Endothelial cell of umbilical vein (primary cell): ENCODE measurements at regions of chr6 and their contacts with region 1.

Region 1: GRCh38 chr6:150016324-150017185 is 8.8 kb downstream of the RAET1L start:
- DNase-seq: peak; percentile 63
- H3K4me3 ChIP-seq: no peak overlapping the region
- H3K27ac ChIP-seq: no peak overlapping the region
- H3K4me1 ChIP-seq: no peaks in the 10 kb centered on the region
- H3K27me3 ChIP-seq: peaks cover 35 to 57% of the 10 kb centered on the region in 2 experiments
- CTCF ChIP-seq: peak; percentile 39 to 49
- POLR2A ChIP-seq: no peak

Region 2: DNA sequence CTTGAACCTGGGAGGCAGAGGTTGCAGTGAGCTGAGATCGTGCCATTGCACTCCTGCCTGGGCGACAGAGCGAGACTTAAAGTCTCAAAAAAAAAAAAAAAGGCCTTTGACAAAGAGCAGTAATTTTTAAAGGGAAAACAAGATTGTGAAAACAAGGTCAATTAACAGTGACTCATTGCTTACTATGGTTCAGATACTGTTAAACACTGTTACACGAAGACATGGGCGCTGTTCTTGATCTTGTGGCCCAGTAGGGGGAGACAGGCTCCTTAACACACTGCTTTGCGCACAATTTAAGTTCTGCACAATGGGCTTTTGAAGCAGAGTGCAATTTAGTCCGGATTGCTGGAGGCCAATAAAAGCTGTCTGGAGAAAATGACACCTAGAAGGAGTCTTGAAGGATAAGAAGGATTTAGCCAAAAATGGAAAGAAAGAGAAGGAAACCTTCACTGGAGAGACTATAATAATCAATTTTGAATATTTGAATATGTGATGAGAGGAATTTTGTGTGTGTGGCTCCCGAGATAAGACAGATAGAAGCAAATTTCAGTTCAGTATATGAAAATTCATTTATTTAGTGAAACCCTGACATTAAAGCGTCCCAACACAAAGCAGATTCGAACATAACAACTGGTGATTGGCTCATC is 292.7 kb before region 1 on chr6:
- CTCF ChIA-PET with region 1: interaction called, 3 read pairs
- POLR2A ChIA-PET with region 1: no interaction called
- dilution Hi-C with region 1: no loop called
- intact Hi-C with region 1: loop called (anchors 5 kb)
- DNase-seq: peak; percentile 76
- H3K4me3 ChIP-seq: no peak overlapping the region
- H3K27ac ChIP-seq: no peak overlapping the region
- H3K4me1 ChIP-seq: peaks cover under 1% of the 10 kb centered on the region
- H3K27me3 ChIP-seq: no peaks in the 10 kb centered on the region
- CTCF ChIP-seq: peak; percentile 77
- POLR2A ChIP-seq: no peak

Region 3: DNA sequence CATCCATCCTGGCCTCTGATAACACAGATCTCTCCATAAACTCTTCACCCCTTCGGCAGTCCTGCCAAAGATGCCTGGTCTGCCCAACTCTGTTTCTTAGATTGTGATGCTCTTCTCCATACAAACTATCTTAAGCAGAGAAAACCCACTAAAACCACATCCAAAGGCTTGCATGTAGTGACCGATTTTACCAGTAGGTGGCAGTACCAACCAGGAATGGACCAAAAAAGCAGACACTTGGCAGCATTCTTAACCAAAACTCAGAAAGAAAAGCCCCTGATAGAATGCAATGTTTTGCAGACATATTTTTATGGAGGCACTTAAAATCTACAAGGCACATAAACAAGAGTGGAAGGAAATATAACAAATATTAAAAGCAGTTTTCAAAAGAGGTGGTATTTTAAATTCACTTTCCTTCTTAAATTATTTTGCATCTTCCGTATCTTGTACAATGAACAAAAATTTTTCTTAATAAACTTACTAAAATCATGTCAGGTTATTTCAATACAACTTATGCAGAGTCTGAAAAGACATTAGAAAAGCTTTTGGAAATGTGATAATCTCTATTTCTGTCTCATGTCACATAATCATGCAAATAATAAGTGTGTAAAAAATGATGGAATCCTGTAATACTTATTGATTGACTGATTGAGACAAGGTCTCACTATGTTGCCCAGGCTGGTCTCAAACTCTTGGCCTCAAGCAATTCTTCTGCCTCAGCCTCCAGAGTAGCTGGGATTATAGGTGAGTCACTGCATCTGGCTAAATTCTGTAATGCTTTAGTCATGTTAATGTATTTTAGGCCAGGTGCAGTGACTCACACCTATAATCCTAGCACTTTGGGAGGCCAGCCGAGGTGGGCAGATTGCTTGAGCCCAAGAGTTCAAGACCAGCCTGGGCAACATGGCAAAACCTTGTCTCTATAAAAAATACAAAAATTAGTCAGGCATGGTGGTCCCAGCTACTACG is 181.8 kb before region 1 on chr6:
- CTCF ChIA-PET with region 1: interaction called, 11 read pairs
- POLR2A ChIA-PET with region 1: no interaction called
- dilution Hi-C with region 1: no loop called
- intact Hi-C with region 1: loop called (anchors 5 kb)
- DNase-seq: peak; percentile 80
- H3K4me3 ChIP-seq: no peak overlapping the region
- H3K27ac ChIP-seq: no peak overlapping the region
- H3K4me1 ChIP-seq: no peaks in the 10 kb centered on the region
- H3K27me3 ChIP-seq: no peaks in the 10 kb centered on the region
- CTCF ChIP-seq: peak; percentile 77
- POLR2A ChIP-seq: no peak

Region 4: GRCh38 chr6:149840345-149841075 is 176.0 kb before region 1 on chr6:
- CTCF ChIA-PET with region 1: interaction called, 11 read pairs
- POLR2A ChIA-PET with region 1: no interaction called
- dilution Hi-C with region 1: no loop called
- intact Hi-C with region 1: no loop called
- DNase-seq: peak; percentile 66
- H3K4me3 ChIP-seq: no peak overlapping the region
- H3K27ac ChIP-seq: no peak overlapping the region
- H3K4me1 ChIP-seq: peaks cover 3% of the 10 kb centered on the region
- H3K27me3 ChIP-seq: no peaks in the 10 kb centered on the region
- CTCF ChIP-seq: peak; percentile 64 to 65
- POLR2A ChIP-seq: no peak

Region 5: DNA sequence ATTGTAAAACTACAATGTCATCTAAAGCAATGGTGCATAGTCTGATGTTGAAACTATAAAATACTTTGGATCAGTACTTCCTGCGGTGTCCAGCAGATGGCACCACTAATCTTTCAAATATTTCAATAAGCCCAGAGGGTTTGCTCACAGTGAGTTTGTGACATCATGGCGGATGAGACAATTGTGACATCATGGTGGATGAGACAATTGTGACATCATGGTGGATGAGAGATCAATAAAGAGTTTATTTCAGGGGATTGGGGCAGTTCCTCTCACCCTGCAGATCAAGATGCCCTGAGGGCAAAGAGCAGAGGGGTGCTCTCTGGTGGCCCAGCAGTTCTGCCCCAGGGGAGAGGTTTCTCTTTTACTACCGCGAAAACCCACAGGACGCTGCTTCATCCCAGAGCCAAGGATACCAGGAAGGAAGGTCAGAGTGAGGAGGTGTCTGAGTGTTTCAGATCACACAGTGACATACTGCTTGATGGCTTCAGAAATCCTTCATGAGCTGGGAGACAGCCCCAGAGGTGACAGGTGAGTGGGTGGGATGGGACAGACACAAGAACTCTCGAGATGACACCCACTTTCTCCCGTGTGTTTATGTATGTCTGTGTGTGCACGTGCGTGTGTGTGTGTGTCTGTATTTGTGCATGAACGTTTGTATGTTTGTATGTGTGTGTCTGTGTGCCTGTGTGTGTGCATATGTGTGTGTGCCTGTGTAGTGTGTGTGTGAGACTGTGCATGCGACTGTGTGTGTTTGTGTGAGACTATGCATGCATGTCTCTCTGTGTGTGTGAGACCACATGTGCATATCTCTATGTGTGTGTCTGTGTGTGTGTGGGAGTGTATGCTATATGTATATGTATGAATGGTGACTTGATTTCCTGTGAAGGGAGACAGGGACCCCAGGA is 82.1 kb before region 1 on chr6:
- CTCF ChIA-PET with region 1: interaction called, 63 read pairs
- POLR2A ChIA-PET with region 1: no interaction called
- dilution Hi-C with region 1: no loop called
- intact Hi-C with region 1: loop called (anchors 1 kb)
- DNase-seq: peak; percentile 74
- H3K4me3 ChIP-seq: no peak overlapping the region
- H3K27ac ChIP-seq: no peak overlapping the region
- H3K4me1 ChIP-seq: peaks cover 10% of the 10 kb centered on the region
- H3K27me3 ChIP-seq: peaks cover 63 to 75% of the 10 kb centered on the region in 2 experiments
- CTCF ChIP-seq: peak; percentile 54 to 64
- POLR2A ChIP-seq: no peak

Region 6: DNA sequence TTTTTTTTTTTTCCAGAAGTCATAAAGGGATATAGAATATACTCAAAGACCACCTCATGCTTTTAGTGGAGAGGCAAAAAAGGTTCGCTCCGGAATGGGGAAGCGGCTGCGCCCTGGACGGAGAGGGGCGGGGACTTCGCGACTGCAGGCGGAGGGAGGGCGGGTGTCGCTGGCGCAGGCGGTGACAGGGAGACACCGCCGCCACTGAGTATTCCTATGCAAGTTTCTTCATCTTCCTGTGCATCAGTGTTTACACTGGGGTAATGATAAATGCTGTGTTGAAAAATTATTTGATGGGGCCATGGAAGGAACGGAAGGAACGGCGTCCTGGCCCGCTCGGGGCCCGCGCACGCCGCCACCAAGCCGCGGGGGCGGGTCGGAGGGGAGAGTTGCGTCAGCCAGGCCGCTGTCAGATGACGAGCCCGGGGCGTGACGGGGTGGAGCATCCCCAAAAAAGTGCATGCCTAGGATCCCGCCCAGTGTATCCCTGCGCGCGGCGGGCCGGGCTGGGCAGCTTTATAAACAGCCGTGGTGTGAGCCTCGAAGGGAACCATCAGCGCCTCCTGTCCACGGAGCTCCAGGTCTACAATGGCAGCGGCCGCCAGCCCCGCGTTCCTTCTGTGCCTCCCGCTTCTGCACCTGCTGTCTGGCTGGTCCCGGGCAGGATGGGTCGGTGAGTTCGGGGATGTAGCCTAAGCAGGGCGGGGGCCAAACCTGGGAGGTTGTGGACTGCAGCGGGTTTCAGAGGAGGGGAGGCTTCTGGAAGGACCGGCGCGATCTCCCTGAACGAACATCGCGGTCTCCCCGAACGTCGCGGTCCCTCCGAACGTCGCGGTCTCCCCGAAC is 52.9 kb before region 1 on chr6 and contains the start of gene ULBP1:
- CTCF ChIA-PET with region 1: interaction called, 10 read pairs
- POLR2A ChIA-PET with region 1: no interaction called
- dilution Hi-C with region 1: no loop called
- intact Hi-C with region 1: no loop called
- DNase-seq: peak; percentile 67
- H3K4me3 ChIP-seq: peak within 1 kb of the TSS; percentile 44 to 55 (median 49)
- H3K27ac ChIP-seq: no peak within 1 kb of the TSS
- H3K4me1 ChIP-seq: peaks cover 18% of the 10 kb centered on the region
- H3K27me3 ChIP-seq: peaks cover 12 to 37% of the 10 kb centered on the region in 2 experiments
- CTCF ChIP-seq: no peak
- POLR2A ChIP-seq: no peak
- total RNA-seq, gene ULBP1: 0.33 and 2.3 TPM in 2 replicates

Region 7: GRCh38 chr6:150004783-150005717 is 11.5 kb before region 1 on chr6:
- CTCF ChIA-PET with region 1: interaction called, 20 read pairs
- POLR2A ChIA-PET with region 1: no interaction called
- dilution Hi-C with region 1: no loop called
- intact Hi-C with region 1: no loop called
- DNase-seq: peak; percentile 89
- H3K4me3 ChIP-seq: peak overlapping the region; percentile 28 to 82 (median 50)
- H3K27ac ChIP-seq: no peak overlapping the region
- H3K4me1 ChIP-seq: peaks cover 2% of the 10 kb centered on the region
- H3K27me3 ChIP-seq: peaks cover 8 to 13% of the 10 kb centered on the region in 2 experiments
- CTCF ChIP-seq: peak in 1 of 2 donors; percentile 32
- POLR2A ChIP-seq: peak; percentile 39